CD14-positive monocyte (primary cell): ENCODE measurements at regions of chr10 and their contacts with region 1.

Region 1: GRCh38 chr10:96089670-96090462 is 40.2 kb upstream of the ZNF518A start:
- DNase-seq: peak; percentile 95 to 97 (median 97)
- H3K4me3 ChIP-seq: peak overlapping the region; percentile 47 to 97 (median 81)
- H3K4me3 Mint-ChIP-seq: peak overlapping the region; percentile 92 to 95
- H3K27ac ChIP-seq: peak overlapping the region; percentile 98 to 100
- H3K27ac Mint-ChIP-seq: peak overlapping the region; percentile 98 to 99 (median 99)
- H3K4me1 ChIP-seq: peaks cover 7 to 12% of the 10 kb centered on the region in 2 donors
- H3K4me1 Mint-ChIP-seq: peaks cover 7% of the 10 kb centered on the region
- H3K27me3 ChIP-seq: peaks cover 23 to 30% of the 10 kb centered on the region in 2 donors
- H3K27me3 Mint-ChIP-seq: peaks cover 19 to 29% (median 27%) of the 10 kb centered on the region in 3 donors
- CTCF ChIP-seq: no peak

Region 2: DNA sequence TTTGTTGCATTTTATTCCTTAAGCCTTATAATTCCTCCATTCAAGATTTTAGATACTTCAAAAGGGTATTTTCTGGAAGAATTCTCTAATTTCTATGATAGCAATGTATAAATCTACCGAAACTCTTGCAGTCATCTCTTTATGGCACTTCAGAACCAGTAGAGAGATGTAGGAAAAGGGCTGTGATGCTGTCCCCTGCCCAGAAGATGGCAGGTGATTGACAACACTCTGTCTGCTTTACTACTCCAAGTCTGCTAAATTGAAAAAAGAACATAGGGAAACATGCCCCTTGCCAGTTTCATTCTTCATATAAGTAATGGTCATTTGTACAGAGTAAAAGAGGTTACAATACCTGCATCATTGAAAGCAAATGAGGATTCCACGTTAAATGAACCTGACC is 401.2 kb before region 1 on chr10:
- intact Hi-C with region 1: no loop called
- DNase-seq: no peak
- H3K4me3 ChIP-seq: no peak overlapping the region
- H3K4me3 Mint-ChIP-seq: no peak overlapping the region
- H3K27ac ChIP-seq: no peak overlapping the region
- H3K27ac Mint-ChIP-seq: no peak overlapping the region
- H3K4me1 ChIP-seq: peaks cover 8 to 10% of the 10 kb centered on the region in 2 donors
- H3K4me1 Mint-ChIP-seq: peaks cover 16% of the 10 kb centered on the region
- H3K27me3 ChIP-seq: no peaks in the 10 kb centered on the region
- H3K27me3 Mint-ChIP-seq: peaks cover 0 to 4% (median 0%) of the 10 kb centered on the region in 3 donors
- CTCF ChIP-seq: no peak

Region 3: GRCh38 chr10:96043033-96043932 is 46.6 kb before region 1 on chr10 and contains the start of gene CCNJ:
- intact Hi-C with region 1: loop called in 1 of 2 experiments (anchors 5 kb)
- DNase-seq: peak; percentile 72 to 83 (median 82)
- H3K4me3 ChIP-seq: peak within 1 kb of the TSS; percentile 56 to 91 (median 77)
- H3K4me3 Mint-ChIP-seq: peak within 1 kb of the TSS; percentile 95
- H3K27ac ChIP-seq: peak within 1 kb of the TSS; percentile 90 to 96
- H3K27ac Mint-ChIP-seq: peak within 1 kb of the TSS; percentile 91 to 97 (median 96)
- H3K4me1 ChIP-seq: peaks cover 26 to 42% of the 10 kb centered on the region in 2 donors
- H3K4me1 Mint-ChIP-seq: peaks cover 42% of the 10 kb centered on the region
- H3K27me3 ChIP-seq: no peaks in the 10 kb centered on the region
- H3K27me3 Mint-ChIP-seq: peaks cover 0 to 4% (median 1%) of the 10 kb centered on the region in 3 donors
- CTCF ChIP-seq: no peak
- polyA plus RNA-seq, gene CCNJ: 1.3 to 9.2 (median 2.5) TPM

Region 4: DNA sequence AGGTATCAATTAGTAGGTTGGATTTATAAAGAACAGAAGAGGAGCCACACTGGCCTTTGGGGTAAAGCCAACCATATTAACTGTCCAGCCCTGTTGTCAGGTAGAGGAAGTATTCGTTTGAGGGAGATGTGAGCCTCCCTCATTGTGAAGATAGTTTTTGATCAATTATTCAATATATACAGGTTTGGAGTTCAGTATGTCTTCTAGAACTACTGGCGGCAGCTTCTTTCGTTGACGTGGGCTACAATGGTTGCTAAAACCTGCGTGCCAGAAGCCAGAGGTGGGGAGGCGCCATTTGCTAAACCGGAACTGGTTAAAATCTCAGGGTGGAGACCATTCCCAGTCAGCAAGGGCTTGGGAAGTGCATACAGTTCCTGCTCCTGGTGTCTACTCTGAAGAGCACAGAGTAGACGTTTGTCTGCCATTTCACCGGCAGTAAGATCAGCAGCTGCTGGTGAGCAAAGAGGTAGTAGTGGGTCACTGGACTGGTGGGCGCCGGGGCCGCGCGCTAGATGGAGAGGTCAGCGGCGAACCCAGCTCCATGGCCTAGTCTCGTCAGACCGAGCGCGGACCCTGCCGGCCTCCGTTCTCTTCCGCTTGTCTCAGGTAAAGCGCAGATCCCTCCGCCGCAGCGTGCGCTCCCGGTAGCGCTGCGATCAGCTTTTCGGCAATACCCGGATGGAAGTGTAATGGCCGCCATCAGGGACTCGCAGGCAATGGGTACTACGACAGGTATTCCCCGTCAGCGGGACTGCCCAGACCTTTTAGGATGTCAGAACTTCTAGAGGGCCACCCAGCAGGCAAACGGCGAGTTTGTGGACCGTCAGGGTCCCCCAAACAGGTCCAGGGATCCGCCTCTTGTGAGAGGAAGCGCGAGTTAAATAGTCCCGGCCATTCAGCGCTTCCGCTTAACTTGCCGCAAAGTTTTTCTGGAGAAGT is 39.8 kb after region 1 on chr10 and contains the start of gene ZNF518A:
- intact Hi-C with region 1: loop called (anchors 1 kb)
- DNase-seq: peak; percentile 94 to 98 (median 96)
- H3K4me3 ChIP-seq: peak within 1 kb of the TSS; percentile 65 to 84 (median 83)
- H3K4me3 Mint-ChIP-seq: peak within 1 kb of the TSS; percentile 94 to 99
- H3K27ac ChIP-seq: peak within 1 kb of the TSS; percentile 88 to 100
- H3K27ac Mint-ChIP-seq: peak within 1 kb of the TSS; percentile 98 to 100 (median 100)
- H3K4me1 ChIP-seq: peaks cover 17 to 21% of the 10 kb centered on the region in 2 donors
- H3K4me1 Mint-ChIP-seq: peaks cover 28% of the 10 kb centered on the region
- H3K27me3 ChIP-seq: peaks cover 6 to 18% of the 10 kb centered on the region in 2 donors
- H3K27me3 Mint-ChIP-seq: peaks cover 12 to 17% (median 16%) of the 10 kb centered on the region in 3 donors
- CTCF ChIP-seq: no peak
- polyA plus RNA-seq, gene ZNF518A: 9.5 to 15.8 (median 13.2) TPM